GM10248 (cell line): ENCODE measurements at regions of chr22 and their contacts with region 1.

Region 1: GRCh38 chr22:38104084-38104483 is 6.4 kb downstream of the BAIAP2L2 start:
- DNase-seq: no peak
- CTCF ChIP-seq: no peak

Region 2: DNA sequence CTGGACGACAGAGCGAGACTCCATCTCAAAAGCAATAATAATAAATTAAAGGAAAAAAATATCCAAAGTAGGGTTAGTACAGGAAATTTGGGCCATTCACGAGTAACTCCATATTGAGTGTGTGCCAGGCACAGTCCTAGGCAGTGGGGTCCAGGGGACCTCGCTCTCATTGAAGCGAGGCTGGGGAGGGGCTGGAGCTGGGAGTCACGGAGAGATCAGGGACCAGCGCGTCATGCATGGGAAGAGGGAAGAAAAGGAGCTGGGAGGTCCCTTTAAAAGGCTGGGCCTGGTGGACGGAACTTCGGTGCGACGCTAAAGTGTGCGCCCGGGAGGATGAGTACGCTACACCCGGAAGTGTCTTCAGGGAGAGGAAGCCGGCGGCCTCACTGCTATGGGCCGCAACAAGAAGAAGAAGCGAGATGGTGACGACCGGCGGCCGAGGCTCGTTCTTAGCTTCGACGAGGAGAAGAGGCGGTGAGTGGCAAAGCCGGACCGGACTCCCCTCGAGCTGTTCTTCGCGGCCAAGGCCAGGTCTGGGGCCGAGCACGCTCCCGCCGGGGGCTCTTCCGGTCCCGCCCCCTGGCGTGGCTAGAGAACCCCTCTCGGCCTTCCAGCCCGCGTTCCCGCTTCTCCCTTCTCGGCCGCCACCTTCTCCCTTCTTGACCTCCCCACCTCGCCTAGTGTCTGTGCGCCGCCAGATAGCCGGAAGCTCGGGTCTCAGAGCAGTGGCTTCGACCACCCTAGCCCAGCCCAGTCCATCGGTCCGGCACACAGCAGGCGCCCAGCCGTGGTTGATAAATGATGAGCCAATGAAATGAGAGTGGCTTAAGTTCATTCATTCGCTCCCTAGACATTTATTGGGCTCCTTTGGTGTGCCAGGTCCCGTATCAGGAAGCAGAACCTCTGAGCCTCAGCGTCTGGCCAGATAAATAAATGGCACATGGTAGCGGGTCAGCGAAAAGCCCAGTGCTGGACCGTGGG is 417.8 kb before region 1 on chr22 and contains the start of gene NOL12:
- CTCF ChIA-PET with region 1: no interaction called
- POLR2A ChIA-PET with region 1: no interaction called
- DNase-seq: peak; percentile 89
- CTCF ChIP-seq: no peak

Region 3: GRCh38 chr22:37989146-37990045 is 114.7 kb before region 1 on chr22:
- CTCF ChIA-PET with region 1: no interaction called
- POLR2A ChIA-PET with region 1: no interaction called
- DNase-seq: no peak
- CTCF ChIP-seq: no peak

Region 4: GRCh38 chr22:37999956-38000272 is 104.2 kb before region 1 on chr22:
- CTCF ChIA-PET with region 1: no interaction called
- POLR2A ChIA-PET with region 1: no interaction called
- DNase-seq: no peak
- CTCF ChIP-seq: no peak

Region 5: GRCh38 chr22:38086001-38086845 is 17.9 kb before region 1 on chr22:
- CTCF ChIA-PET with region 1: interaction called, 10 read pairs
- POLR2A ChIA-PET with region 1: no interaction called
- DNase-seq: no peak
- CTCF ChIP-seq: no peak